A549 (cell line): ENCODE measurements at regions of chr15 and their contacts with region 1.

Region 1: GRCh38 chr15:90648137-90649070 is 68.7 kb upstream of the BLM start:
- DNase-seq: peak; percentile 77 to 78
- ATAC-seq: peak; percentile 32 to 72; a peak in 3 of 6 replicates
- H3K4me3 ChIP-seq: no peak overlapping the region
- H3K27ac ChIP-seq: no peak overlapping the region
- H3K4me1 ChIP-seq: peaks cover 13% of the 10 kb centered on the region; the same call in 2 of the 3 replicates
- CTCF ChIP-seq: peak; percentile 98
- EP300 ChIP-seq: no peak
- POLR2A ChIP-seq: no peak
- RAD21 ChIP-seq: peak; percentile 96 to 97

Region 2: GRCh38 chr15:90659481-90659880 is 11.1 kb after region 1 on chr15:
- CTCF ChIA-PET with region 1: interaction called, 22 read pairs
- POLR2A ChIA-PET with region 1: interaction called, 6 read pairs
- DNase-seq: no peak
- ATAC-seq: no peak
- H3K4me3 ChIP-seq: no peak overlapping the region
- H3K27ac ChIP-seq: no peak overlapping the region
- H3K4me1 ChIP-seq: peaks cover 10% of the 10 kb centered on the region
- CTCF ChIP-seq: no peak
- EP300 ChIP-seq: no peak
- POLR2A ChIP-seq: no peak
- RAD21 ChIP-seq: no peak

Region 3: GRCh38 chr15:90665288-90666134 is 17.1 kb after region 1 on chr15:
- CTCF ChIA-PET with region 1: interaction called, 22 read pairs
- POLR2A ChIA-PET with region 1: interaction called, 6 read pairs
- DNase-seq: peak; percentile 78 to 95
- ATAC-seq: peak; percentile 94 to 97
- H3K4me3 ChIP-seq: peak overlapping the region; percentile 73
- H3K27ac ChIP-seq: peak overlapping the region; percentile 90 to 95
- H3K4me1 ChIP-seq: peaks cover 14% of the 10 kb centered on the region
- CTCF ChIP-seq: no peak
- EP300 ChIP-seq: no peak
- POLR2A ChIP-seq: peak; percentile 78; the same call in 1 of the 2 replicates
- RAD21 ChIP-seq: no peak

Region 4: GRCh38 chr15:90710436-90711027 is 62.1 kb after region 1 on chr15:
- CTCF ChIA-PET with region 1: interaction called, 10 read pairs
- POLR2A ChIA-PET with region 1: no interaction called
- DNase-seq: peak in 1 of 2 experiments; percentile 14
- ATAC-seq: peak; percentile 43 to 81; a peak in 4 of 6 replicates
- H3K4me3 ChIP-seq: no peak overlapping the region
- H3K27ac ChIP-seq: no peak overlapping the region
- H3K4me1 ChIP-seq: no peaks in the 10 kb centered on the region
- CTCF ChIP-seq: no peak
- EP300 ChIP-seq: no peak
- POLR2A ChIP-seq: no peak
- RAD21 ChIP-seq: no peak

Region 5: DNA sequence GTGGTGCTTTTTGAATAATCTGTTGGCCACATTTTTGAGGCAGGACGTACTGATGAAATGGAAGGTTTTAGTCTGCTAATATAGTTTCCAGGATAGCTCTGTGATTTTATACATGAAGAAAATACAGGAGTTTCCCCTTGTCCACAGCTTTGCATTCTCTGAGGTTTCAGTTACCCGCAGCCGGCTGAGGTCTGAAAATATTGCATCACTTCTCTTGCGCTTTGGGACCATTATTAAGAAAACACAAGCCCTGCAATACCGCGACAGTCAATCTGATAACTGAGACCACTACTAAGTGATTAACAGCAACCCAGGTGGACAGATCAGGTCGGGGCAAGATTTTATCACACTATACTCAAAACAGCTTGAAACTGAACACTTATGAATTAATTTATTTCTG is 101.8 kb after region 1 on chr15:
- CTCF ChIA-PET with region 1: no interaction called
- POLR2A ChIA-PET with region 1: no interaction called
- DNase-seq: no peak
- ATAC-seq: no peak
- H3K4me3 ChIP-seq: no peak overlapping the region
- H3K27ac ChIP-seq: no peak overlapping the region
- H3K4me1 ChIP-seq: no peaks in the 10 kb centered on the region
- CTCF ChIP-seq: no peak
- EP300 ChIP-seq: no peak
- POLR2A ChIP-seq: no peak
- RAD21 ChIP-seq: no peak

Region 6: DNA sequence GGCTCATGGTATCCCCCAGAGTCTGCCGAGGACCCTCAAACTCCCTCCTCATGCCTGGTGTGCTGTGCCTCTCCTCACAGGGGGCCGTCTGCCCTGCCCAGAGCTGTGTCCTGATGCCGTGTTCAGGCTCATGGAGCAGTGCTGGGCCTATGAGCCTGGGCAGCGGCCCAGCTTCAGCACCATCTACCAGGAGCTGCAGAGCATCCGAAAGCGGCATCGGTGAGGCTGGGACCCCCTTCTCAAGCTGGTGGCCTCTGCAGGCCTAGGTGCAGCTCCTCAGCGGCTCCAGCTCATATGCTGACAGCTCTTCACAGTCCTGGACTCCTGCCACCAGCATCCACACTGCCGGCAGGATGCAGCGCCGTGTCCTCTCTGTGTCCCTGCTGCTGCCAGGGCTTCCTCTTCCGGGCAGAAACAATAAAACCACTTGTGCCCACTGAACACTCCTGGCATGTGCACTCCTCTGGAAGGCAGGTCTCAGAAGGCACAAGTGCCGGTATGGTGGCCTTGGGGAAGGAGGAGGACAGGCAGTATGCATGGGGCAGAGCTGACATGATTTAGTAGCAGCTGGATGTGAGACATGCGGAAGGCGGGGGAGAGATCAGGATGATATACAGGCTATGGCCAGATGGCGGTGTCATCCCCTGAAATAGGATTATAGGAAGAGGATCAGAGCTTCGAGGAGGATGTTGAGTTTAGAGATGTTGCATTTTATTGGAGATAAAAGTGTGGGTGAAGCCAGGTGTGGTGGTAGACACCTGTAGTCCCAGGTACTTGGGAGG is 247.1 kb after region 1 on chr15:
- CTCF ChIA-PET with region 1: interaction called, 265 read pairs
- POLR2A ChIA-PET with region 1: no interaction called
- DNase-seq: peak in 1 of 2 experiments; percentile 43
- ATAC-seq: peak; percentile 60 to 76; a peak in 5 of 6 replicates
- H3K4me3 ChIP-seq: no peak overlapping the region
- H3K27ac ChIP-seq: no peak overlapping the region
- H3K4me1 ChIP-seq: no peaks in the 10 kb centered on the region
- CTCF ChIP-seq: no peak
- EP300 ChIP-seq: no peak
- POLR2A ChIP-seq: no peak
- RAD21 ChIP-seq: no peak